Activated CD8-positive, alpha-beta T cell treated with anti-CD3 and anti-CD28 coated beads for 36 hours (primary cell): ENCODE measurements at regions of chr17 and their contacts with region 1.

Region 1: GRCh38 chr17:82236142-82236981 is 7.5 kb downstream of the SLC16A3 start:
- DNase-seq: peak; percentile 74
- ATAC-seq: peak; percentile 40
- H3K4me3 Mint-ChIP-seq: no peak overlapping the region
- H3K27ac Mint-ChIP-seq: no peak overlapping the region
- H3K4me1 Mint-ChIP-seq: peaks cover 44% of the 10 kb centered on the region
- H3K27me3 Mint-ChIP-seq: no peaks in the 10 kb centered on the region
- CTCF ChIP-seq: peak; percentile 89

Region 2: DNA sequence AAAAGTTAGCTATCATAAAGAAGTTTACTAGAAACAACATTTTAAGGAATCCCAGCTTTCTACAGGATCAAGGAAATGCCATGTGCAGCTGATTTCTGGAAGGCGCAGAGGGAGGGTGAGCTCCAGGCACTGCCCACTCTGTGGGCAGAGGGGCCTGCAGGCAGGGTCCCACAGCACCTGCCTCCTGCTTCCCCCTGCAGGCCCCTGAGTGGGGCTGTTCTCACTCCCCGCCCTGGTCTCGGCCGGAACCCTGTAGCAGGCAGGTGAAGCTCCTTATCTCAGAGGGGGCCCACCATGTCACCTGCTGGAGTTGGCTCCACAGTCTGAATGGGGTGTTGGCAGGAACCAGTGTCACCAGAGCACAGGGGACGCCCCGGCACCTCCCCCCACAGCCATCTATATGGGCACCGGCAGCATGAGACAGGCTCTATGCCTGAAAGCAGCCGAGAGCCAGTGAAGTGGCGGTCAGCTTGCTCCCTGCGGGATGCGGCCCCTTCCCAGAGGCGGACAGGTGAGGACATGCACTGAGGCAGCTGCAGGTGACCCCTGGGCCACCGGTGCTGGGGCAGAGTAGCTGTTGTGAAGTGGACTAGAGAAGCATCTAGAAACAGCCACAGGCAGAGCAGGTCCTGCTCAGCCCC is 90.7 kb before region 1 on chr17:
- CTCF ChIA-PET with region 1: no interaction called
- POLR2A ChIA-PET with region 1: no interaction called
- intact Hi-C with region 1: no loop called
- DNase-seq: no peak
- ATAC-seq: no peak
- H3K4me3 Mint-ChIP-seq: no peak overlapping the region
- H3K27ac Mint-ChIP-seq: no peak overlapping the region
- H3K4me1 Mint-ChIP-seq: no peaks in the 10 kb centered on the region
- H3K27me3 Mint-ChIP-seq: no peaks in the 10 kb centered on the region
- CTCF ChIP-seq: no peak

Region 3: DNA sequence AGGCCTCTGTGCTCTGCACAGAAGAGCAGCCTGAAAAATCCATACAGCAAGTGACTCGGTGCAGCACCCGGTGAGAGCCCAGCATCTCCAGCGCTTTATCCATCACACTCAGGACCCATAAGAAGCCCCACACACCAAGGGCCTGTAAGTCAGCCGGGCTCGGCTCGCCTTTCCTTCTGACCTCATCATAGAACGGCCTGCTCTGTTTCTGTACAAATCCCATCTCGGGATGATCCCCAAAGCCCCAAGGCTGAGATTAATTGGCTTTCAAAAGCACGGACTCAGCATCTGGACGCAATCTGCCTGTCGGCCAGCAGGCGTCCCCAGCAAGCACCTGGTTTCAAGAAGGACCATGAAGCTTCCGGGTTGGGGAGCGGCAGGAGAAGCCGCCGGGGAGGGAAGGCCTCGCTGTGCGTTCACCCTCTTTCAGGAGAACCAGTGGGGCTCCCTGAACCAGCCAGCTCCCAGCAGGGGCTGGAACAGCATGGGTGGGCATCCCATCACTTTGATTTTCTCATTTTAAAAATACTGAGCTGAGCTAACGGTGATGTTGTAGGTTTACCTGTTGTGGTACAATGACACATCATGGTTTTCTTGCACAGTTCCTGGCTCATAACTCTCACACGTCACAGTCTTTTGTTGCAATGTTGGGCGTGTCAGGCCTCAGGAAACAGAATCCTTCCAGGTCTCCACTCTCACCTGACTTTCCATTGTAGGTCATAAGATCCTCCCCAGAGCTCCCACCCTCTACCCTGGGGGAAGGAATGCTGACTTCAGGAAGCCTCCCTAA is 30.4 kb before region 1 on chr17:
- CTCF ChIA-PET with region 1: interaction called, 11 read pairs
- POLR2A ChIA-PET with region 1: interaction called, 3 read pairs
- intact Hi-C with region 1: no loop called
- DNase-seq: peak; percentile 90
- ATAC-seq: peak; percentile 73
- H3K4me3 Mint-ChIP-seq: peak overlapping the region; percentile 66
- H3K27ac Mint-ChIP-seq: peak overlapping the region; percentile 94
- H3K4me1 Mint-ChIP-seq: peaks cover 58% of the 10 kb centered on the region
- H3K27me3 Mint-ChIP-seq: no peaks in the 10 kb centered on the region
- CTCF ChIP-seq: peak; percentile 96